Left cardiac atrium (tissue), 4 donors: ENCODE measurements at regions of chr7 and their contacts with region 1.

Region 1: GRCh38 chr7:35906191-35906908 is 105.5 kb downstream of the SEPTIN7 start:
- DNase-seq: peak; percentile 28
- ATAC-seq: peak; percentile 88 to 89

Region 2: DNA sequence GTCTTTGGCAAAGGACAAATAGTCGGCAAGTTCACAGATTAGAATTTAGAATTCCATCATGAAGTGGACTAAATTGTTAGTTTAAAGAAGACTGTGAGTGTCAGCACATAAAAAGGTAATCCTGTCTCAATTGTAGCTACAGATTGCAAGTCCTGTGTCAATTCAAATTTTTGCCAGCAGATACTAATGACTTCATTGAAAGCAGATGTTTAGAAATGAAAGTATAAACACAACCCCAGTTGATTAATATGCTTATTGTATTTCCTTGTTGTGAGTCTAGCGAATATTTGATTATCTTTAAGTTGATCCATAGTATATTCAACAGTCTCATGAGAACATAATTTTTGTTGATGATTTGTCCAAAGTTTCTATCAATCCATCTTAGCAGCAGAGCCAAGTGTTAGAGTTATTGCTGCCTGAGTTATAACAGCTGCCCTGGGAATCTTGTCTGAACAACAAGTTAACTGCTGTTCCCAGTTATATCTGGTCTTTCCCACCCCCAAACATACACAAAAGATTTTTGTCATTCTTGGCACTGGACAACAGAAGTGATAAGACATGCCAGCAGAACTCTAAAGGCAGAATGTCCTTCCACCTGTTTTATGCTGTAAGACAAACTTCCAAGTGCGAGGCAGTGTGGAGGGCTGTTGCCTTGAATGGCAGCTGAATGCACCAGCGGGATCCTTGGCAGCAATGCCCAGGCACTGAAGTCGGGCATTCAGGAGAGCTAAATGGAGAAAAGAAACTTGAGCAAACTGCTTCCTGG is 190.1 kb before region 1 on chr7:
- intact Hi-C with region 1: loop called (anchors 2 to 5 kb)
- DNase-seq: peak; percentile 34
- ATAC-seq: peak; percentile 78 to 81

Region 3: GRCh38 chr7:35975851-35976454 is 69.6 kb after region 1 on chr7:
- intact Hi-C with region 1: loop called in 1 of 2 experiments (anchors 10 kb)
- DNase-seq: no peak
- ATAC-seq: peak; percentile 71 to 78